ENCODE measurements at regions of chr4 and their contacts with region 1.

Region 1: GRCh38 chr4:67087897-67088296 is 457.4 kb downstream of the CENPC start:
- DNase-seq: peak; percentile 35
- H3K4me3 ChIP-seq: no peak overlapping the region
- H3K27ac ChIP-seq: no peak overlapping the region
- H3K4me1 ChIP-seq: no peaks in the 10 kb centered on the region
- H3K27me3 ChIP-seq: no peaks in the 10 kb centered on the region
- CTCF ChIP-seq: peak; percentile 34 to 55 (median 42)
- EP300 ChIP-seq: no peak
- POLR2A ChIP-seq: no peak

Region 2: GRCh38 chr4:67006791-67007190 is 81.1 kb before region 1 on chr4:
- in situ Hi-C with region 1: no loop called
- intact Hi-C with region 1: no loop called
- DNase-seq: no peak
- H3K4me3 ChIP-seq: no peak overlapping the region
- H3K27ac ChIP-seq: no peak overlapping the region
- H3K4me1 ChIP-seq: no peaks in the 10 kb centered on the region
- H3K27me3 ChIP-seq: no peaks in the 10 kb centered on the region
- CTCF ChIP-seq: no peak
- EP300 ChIP-seq: no peak
- POLR2A ChIP-seq: no peak

Region 3: DNA sequence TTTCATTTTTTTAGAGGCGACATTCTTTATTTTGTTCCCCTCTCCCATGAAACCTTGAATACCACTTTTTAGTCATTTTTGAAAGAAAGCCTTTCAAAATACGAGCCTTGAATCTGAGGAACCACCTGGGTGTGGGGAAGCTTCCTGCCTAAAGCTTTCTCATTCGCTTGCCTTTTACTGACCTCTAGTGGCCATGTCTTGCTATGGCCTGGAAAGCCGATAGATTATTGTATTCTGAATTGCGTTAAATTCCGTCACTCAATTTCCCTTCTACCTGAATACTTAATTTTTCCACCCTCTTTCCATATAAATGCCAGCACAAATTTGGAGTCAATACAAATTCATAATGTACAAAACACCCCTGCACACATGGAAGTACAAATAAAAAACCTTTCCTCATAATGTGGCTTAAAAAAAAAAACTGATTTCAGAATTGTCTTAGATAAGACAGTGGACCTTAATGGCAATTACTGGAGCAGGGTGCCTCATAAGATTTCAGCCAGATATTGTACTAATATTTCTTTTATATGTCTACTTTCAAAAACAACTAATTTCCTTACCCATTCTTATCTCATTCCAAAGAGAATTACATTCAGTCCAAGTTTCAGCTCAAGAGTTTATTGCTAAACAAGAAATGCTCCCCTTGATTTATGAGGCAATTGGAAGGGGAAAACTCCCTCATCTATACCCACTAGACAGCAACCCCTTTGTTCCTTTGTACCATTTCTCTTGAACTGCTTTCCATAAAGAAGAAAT is 239.5 kb after region 1 on chr4:
- in situ Hi-C with region 1: loop called in 1 of 4 experiments (anchors 25 kb)
- intact Hi-C with region 1: no loop called
- DNase-seq: peak; percentile 46
- H3K4me3 ChIP-seq: no peak overlapping the region
- H3K27ac ChIP-seq: no peak overlapping the region
- H3K4me1 ChIP-seq: peaks cover 0 to 6% (median 0%) of the 10 kb centered on the region in 4 donors
- H3K27me3 ChIP-seq: peaks cover 18% of the 10 kb centered on the region
- CTCF ChIP-seq: peak; percentile 51 to 92 (median 86)
- EP300 ChIP-seq: no peak
- POLR2A ChIP-seq: no peak

Region 4: GRCh38 chr4:67512501-67512900 is 424.6 kb after region 1 on chr4:
- in situ Hi-C with region 1: no loop called
- intact Hi-C with region 1: no loop called
- DNase-seq: no peak
- H3K4me3 ChIP-seq: no peak overlapping the region
- H3K27ac ChIP-seq: no peak overlapping the region
- H3K4me1 ChIP-seq: no peaks in the 10 kb centered on the region
- H3K27me3 ChIP-seq: no peaks in the 10 kb centered on the region
- CTCF ChIP-seq: no peak
- EP300 ChIP-seq: no peak
- POLR2A ChIP-seq: no peak